ENCODE measurements at regions of chr1 and their contacts with region 1.

Region 1: GRCh38 chr1:228405987-228406265 is 709 bp downstream of the TRIM11 start:
- DNase-seq: no peak
- ATAC-seq: no peak
- H3K4me3 Mint-ChIP-seq: peak overlapping the region; percentile 94
- H3K27ac Mint-ChIP-seq: peak overlapping the region; percentile 86; the same call in 1 of the 2 replicates
- H3K4me1 Mint-ChIP-seq: peaks cover 24% of the 10 kb centered on the region
- H3K27me3 Mint-ChIP-seq: no peaks in the 10 kb centered on the region
- CTCF ChIP-seq: no peak

Region 2: GRCh38 chr1:228349701-228350171 is 56.2 kb before region 1 on chr1:
- CTCF ChIA-PET with region 1: no interaction called
- POLR2A ChIA-PET with region 1: no interaction called
- DNase-seq: no peak
- ATAC-seq: no peak
- H3K4me3 Mint-ChIP-seq: no peak overlapping the region
- H3K27ac Mint-ChIP-seq: no peak overlapping the region
- H3K4me1 Mint-ChIP-seq: no peaks in the 10 kb centered on the region
- H3K27me3 Mint-ChIP-seq: no peaks in the 10 kb centered on the region
- CTCF ChIP-seq: no peak

Region 3: DNA sequence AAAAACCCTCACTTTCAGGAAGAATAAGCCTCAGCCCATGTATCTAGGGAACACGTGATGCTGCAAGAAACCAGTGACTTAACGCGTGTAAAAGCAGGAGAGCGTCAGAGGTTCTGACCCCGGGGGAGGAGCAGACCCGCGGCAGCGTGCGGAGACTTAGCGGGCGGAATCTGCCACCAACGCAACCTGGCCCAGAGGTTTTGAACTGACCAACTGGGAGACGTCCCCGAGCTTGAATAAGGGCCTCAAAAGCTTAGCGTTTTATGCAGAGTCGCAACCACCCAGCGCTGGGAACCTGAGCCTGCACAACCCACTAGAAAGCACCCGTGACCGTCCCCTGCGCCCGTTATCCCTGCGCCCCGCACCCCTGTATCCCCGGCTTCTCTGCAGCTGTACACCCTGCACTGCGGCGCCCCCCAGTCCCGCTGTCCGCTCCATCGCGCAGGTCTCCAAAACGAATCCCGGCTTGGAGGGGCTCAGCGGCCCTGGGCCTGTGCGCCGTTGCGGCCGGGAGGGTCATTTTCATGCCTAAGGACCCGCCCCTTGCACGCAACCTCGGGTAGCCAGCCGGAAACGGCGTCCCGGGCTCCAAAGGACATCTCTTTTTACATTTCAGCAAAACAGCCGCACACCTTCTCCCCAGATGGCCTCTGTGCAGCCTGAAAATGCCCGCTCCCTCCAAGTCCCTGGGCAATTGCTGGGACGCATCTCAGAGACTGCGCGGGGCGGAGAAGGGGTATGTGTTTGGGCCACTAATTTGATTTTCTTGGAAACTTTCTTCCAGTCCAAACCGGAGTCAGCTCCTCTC is 40.1 kb after region 1 on chr1:
- CTCF ChIA-PET with region 1: interaction called, 5 read pairs
- POLR2A ChIA-PET with region 1: interaction called, 10 read pairs
- DNase-seq: peak; percentile 77
- ATAC-seq: peak; percentile 80
- H3K4me3 Mint-ChIP-seq: peak overlapping the region; percentile 85
- H3K27ac Mint-ChIP-seq: no peak overlapping the region
- H3K4me1 Mint-ChIP-seq: peaks cover 16% of the 10 kb centered on the region
- H3K27me3 Mint-ChIP-seq: peaks cover 76% of the 10 kb centered on the region
- CTCF ChIP-seq: no peak

Region 4: DNA sequence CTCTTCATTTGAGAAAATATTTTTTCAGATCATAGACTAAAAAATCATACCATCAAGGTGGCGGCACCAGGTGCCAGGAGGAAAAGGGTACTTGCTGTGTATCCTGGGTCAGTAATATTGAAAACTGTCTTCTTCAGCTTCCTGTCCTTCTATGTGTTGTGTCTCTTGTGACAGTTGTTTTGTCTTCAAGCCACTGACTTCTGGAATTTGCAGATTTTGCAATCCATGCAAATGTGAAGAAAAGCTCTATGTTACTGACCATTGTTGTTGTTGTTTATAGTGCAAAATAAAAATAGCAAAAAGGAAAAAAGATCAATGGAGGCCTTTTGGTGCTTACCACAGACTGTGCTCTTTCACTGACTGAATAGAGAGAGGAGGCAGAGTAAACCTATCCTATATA is 246.2 kb after region 1 on chr1:
- CTCF ChIA-PET with region 1: no interaction called
- POLR2A ChIA-PET with region 1: no interaction called
- DNase-seq: no peak
- ATAC-seq: no peak
- H3K4me3 Mint-ChIP-seq: no peak overlapping the region
- H3K27ac Mint-ChIP-seq: no peak overlapping the region
- H3K4me1 Mint-ChIP-seq: peaks cover 16% of the 10 kb centered on the region
- H3K27me3 Mint-ChIP-seq: peaks cover 52% of the 10 kb centered on the region
- CTCF ChIP-seq: no peak